ENCODE measurements at regions of chr1 and their contacts with region 1.

Region 1: DNA sequence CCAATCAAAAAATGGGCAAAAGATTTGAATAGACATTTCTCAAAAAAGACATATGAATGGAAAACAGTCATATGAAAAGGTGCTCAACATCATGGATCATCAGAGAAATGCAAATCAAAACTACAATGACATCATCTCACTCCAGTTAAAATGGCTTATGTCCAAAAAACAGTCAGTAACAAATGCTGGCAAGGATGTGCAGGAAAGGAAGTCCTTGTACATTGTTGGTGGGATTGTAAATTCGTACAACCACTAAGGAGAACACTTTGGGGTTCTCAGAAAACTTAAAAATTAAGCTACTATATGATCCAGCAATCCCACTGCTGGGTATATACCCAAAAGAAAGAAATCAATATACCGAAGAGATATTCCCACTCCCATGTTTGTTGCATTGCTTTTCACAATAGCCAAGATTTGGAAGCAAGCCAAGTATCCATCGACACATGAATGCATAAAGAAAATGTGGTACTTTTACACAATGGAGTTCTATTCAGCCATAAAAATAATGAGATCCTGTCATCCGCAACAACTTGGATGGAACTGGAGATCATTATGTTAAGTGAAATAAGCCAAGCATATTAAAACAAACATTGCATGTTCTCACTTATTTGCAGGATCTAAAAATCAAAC is 17.9 kb downstream of the GBP5 start:
- DNase-seq: no peak
- ATAC-seq: no peak

Region 2: GRCh38 chr1:89221341-89221740 is 33.4 kb before region 1 on chr1:
- intact Hi-C with region 1: loop called (anchors 1 kb)
- DNase-seq: no peak
- ATAC-seq: no peak

Region 3: GRCh38 chr1:90370686-90371447 is 1116.1 kb after region 1 on chr1:
- intact Hi-C with region 1: no loop called
- DNase-seq: no peak
- ATAC-seq: no peak

Measured in sciatic nerve (tissue), 2 donors.